ENCODE measurements at regions of chr11 and their contacts with region 1.

Region 1: GRCh38 chr11:78228467-78228866 is 39.7 kb downstream of the USP35 start:
- DNase-seq: peak; percentile 87

Region 2: GRCh38 chr11:78139422-78140391 is 88.8 kb before region 1 on chr11 and contains the start of gene ALG8:
- in situ Hi-C with region 1: no loop called
- DNase-seq: peak; percentile 96

Region 3: DNA sequence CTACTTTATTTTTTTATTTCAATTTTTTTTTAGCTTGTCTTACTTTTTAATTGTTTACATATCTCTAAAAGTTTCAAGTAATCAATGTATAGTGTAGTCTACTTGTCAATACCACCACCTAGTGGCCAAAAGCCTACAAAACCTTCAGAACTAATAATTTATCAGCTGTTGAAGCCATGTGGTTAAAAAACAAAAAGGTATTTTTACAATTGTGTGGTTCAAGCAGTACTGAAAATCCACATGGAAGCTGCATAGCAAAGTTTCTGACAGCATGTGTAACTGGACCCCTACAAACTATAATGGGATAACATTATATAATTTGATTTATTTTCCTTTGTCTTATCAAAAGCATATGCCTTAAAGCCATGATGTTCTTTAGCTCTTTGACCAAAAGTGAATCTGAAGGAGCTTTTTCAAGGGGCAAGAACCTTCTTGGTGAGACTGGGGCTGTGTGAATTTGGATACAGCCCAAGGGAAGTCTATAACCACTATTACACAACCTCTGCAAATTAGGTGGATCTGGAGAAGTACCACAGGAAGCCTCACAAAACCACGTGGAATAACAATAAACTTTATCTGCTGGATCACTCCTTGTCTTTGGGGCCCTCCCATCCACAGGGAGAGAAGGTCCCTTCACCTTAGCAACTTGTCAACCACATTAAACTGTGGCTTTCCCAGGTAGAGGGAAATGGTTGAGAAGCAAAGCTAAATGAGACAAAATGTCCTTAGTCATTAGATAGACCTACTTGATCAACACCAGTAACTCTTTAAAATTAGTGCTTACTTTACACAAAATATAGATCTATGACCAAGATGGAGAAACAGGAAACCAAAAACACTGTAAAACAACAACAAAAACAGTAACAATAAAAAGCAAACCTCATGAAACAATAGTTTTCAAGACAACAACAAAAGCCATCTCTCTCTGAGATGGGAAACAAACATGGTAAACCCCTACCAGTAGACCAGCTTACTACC is 336.3 kb after region 1 on chr11:
- in situ Hi-C with region 1: loop called (anchors 10 kb)
- DNase-seq: peak; percentile 78

Region 4: DNA sequence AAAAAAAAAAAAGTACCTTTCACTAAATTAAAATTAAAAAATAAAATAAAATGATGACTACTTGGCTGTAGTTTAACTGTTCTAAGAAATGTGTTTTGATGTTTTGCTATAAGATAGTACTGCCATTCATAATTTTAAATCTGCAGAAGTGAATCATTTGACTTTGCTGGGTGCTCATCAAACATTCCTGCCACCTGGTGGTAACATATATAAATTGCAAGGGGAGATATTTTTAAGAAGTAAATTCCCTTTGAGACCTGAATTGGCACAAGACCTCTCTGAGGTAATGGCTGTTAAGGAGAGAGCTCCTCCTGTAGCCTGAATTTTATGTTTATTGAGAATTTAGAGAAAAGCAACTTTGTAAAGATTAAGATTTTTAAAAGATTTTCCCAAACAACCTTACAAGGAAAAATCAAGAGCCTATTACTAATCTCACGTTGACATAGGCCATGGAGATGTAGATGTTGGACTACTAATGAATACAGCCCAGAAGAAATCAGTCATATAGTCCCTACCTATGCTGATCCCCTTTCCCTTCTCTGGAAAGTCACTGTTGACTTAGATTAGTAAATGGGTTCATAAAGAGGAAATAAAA is 358.1 kb after region 1 on chr11:
- in situ Hi-C with region 1: no loop called
- DNase-seq: peak; percentile 64

Region 5: GRCh38 chr11:79227757-79228755 is 999.6 kb after region 1 on chr11:
- in situ Hi-C with region 1: no loop called
- DNase-seq: no peak

Measured in KBM-7 (cell line).